Heart left ventricle (tissue), 16 donors: ENCODE measurements at regions of chr6 and their contacts with region 1.

Region 1: GRCh38 chr6:33633462-33634158 is 12.5 kb downstream of the ITPR3 start:
- DNase-seq: peak; percentile 72 to 84 (median 79)
- ATAC-seq: peak; percentile 71 to 87 (median 86)
- H3K4me3 ChIP-seq: peak overlapping the region in 11 of 12 donors; percentile 23 to 58 (median 47)
- H3K27ac ChIP-seq: peak overlapping the region in 10 of 12 donors; percentile 0 to 72 (median 42)
- H3K4me1 ChIP-seq: peaks cover 0 to 32% (median 22%) of the 10 kb centered on the region in 12 donors
- H3K27me3 ChIP-seq: peaks cover 0 to 6% (median 0%) of the 10 kb centered on the region in 9 donors
- CTCF ChIP-seq: no peak
- POLR2A ChIP-seq: no peak

Region 2: DNA sequence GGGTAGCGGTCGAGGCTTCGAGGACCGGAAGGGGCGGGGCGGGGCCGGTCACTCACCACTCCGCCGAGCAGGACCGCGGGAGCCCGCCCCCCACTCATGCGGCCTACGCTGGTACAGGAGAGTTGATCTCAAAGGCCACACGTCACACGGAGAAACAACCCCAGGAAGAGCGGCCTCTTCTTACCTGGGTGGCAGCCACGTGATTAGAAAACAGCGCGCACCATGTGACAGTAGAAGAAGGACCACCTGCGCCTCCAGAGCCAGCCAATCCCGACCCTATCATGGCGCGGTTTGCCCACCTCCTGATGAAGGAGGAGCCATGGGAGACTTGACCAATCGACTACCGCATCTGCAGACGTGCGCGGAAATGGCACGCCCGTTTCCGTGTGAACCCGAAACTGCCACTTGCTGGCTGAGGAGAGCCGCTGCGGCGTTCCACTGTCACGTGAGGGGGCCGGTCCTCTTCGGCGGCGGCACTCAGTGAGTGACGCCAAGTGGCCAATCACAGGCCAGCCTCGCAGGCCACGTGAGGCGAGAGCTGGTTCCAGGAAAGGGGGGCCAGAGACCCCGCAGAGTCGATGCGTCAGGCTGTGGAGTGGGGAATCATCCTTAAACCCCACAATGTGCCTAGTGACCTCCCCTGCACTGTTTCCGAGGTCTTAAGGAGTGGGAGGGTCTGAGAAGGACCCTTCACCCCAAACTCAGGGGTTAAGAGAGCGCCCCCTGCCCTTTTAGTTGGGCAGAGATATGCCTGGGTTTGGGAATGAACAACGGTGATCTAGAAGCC is 215.5 kb before region 1 on chr6 and contains the start of gene CUTA:
- intact Hi-C with region 1: no loop called
- DNase-seq: peak; percentile 100
- ATAC-seq: peak; percentile 94 to 97 (median 96)
- H3K4me3 ChIP-seq: peak within 1 kb of the TSS; percentile 30 to 80 (median 65)
- H3K27ac ChIP-seq: peak within 1 kb of the TSS; percentile 83 to 97 (median 92)
- H3K4me1 ChIP-seq: peaks cover 0 to 40% (median 25%) of the 10 kb centered on the region in 12 donors
- H3K27me3 ChIP-seq: no peaks in the 10 kb centered on the region
- CTCF ChIP-seq: peak in 11 of 12 donors; percentile 23 to 64 (median 50)
- POLR2A ChIP-seq: peak in 1 of 2 donors; percentile 63
- total RNA-seq, gene CUTA: 99.3 to 142 (median 120) TPM

Region 3: DNA sequence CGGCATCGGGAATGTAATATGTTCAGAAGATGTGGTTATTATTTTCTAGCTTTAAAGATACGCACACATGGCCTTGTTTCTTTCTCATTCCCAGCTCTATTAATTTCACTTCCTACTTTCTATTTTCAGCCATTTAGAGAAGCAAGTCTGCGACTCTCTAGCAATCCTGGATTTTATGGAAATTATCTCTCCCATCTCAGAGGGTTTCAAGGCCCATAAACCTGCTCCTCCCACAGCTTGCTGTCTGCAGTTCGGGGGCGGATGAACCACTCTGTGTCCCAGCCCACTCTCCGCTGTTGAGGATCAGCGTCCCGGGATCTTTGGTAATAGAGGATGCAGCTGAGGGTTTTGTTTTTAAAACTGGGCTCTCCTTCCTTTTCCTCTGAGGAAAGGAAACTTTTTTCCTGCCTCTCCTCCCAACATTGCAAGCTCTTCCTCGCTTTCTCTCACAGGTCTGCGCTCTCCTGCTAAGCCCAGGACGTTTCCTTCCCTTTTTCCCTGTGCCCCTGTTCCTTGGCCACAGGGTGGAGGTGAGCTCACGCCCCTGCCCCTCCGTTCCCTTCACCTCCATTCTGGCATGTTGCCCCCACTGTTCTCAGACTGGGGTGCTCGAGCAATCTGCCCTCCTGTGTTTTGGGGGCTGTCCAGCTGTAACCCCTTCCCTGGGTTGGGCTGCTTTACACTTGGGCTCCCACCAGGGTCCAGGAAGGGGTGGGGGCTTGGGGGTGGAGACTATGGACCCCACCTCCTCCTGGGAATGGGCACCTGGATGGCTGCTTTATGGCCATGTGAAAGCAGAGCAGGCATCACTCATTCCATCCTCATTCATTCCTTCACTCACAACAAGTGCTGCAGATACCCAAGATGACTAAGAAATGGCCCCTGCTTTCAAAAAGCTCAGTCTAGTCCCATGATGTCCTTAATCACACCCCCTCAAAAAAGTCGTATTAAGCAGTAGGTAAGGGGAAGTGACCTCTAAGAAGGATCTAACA is 124.4 kb before region 1 on chr6:
- intact Hi-C with region 1: no loop called
- DNase-seq: peak in 1 of 5 donors; percentile 20
- ATAC-seq: peak in 1 of 4 donors; percentile 28
- H3K4me3 ChIP-seq: peak overlapping the region in 8 of 12 donors; percentile 18 to 42 (median 34)
- H3K27ac ChIP-seq: peak overlapping the region in 6 of 12 donors; percentile 22 to 49 (median 38)
- H3K4me1 ChIP-seq: peaks cover 0 to 17% (median 2%) of the 10 kb centered on the region in 12 donors
- H3K27me3 ChIP-seq: peaks cover 0 to 5% (median 0%) of the 10 kb centered on the region in 9 donors
- CTCF ChIP-seq: no peak
- POLR2A ChIP-seq: no peak

Region 4: DNA sequence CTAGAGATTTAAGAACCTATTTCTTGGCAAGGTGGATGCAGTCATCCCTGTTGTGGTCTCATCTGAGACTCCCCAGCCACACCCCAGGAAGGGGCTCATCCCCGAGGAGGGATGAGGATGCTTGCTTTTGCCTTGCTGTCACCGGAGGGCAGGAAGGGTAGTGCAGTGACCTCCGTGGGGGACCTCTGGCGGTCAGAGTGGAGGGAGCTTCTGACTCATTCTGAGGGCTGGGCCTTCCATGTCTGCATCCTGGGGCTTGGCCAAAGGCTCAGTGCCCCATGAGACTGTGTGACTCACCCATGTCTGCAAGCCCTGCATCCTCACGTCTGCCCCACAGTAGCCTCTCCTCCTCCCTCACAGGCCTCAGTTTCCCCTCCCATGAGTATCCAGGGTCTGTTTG is 39.2 kb after region 1 on chr6:
- intact Hi-C with region 1: loop called in 1 of 10 experiments (anchors 5 kb)
- DNase-seq: peak; percentile 80 to 95 (median 89)
- ATAC-seq: peak; percentile 93 to 98 (median 96)
- H3K4me3 ChIP-seq: no peak overlapping the region
- H3K27ac ChIP-seq: no peak overlapping the region
- H3K4me1 ChIP-seq: peaks cover 0 to 13% (median 6%) of the 10 kb centered on the region in 12 donors
- H3K27me3 ChIP-seq: no peaks in the 10 kb centered on the region
- CTCF ChIP-seq: peak; percentile 20 to 73 (median 59)
- POLR2A ChIP-seq: no peak

Region 5: DNA sequence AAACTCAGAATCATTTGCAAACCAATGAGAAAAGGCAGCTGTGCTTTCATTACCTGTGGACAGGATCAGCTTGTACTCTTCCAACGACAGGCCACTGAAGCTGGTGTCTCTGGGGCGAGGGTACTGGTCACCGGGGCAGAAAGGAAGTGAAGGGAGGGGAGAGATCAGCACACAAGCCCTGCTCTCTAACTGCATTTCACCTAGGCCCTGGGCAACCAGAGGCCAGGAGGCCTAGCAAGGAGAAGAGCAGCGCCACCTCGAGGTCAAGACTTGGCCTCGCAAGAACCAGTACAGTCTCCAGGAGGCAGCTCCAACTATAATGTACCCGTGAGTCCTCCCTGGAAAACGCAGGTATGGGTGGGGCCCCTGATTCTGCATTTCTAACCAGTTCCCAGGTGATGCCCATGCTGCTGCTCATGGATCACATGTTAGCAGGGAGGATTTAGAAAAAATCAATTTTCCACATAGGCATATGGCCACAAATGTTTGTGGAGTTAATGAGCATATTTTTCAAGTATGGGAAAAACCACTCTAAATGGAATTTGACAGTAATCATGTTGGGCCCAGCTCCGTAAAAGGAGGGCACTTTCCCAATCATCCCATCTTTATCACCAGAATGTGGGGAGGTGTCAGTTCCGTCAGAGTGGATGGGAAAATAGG is 66.9 kb after region 1 on chr6:
- intact Hi-C with region 1: loop called in 1 of 10 experiments (anchors 2 kb)
- DNase-seq: peak; percentile 50 to 77 (median 75)
- ATAC-seq: peak; percentile 27 to 58 (median 48)
- H3K4me3 ChIP-seq: no peak overlapping the region
- H3K27ac ChIP-seq: peak overlapping the region in 4 of 12 donors; percentile 19 to 41 (median 38)
- H3K4me1 ChIP-seq: peaks cover 6 to 57% (median 39%) of the 10 kb centered on the region in 12 donors
- H3K27me3 ChIP-seq: no peaks in the 10 kb centered on the region
- CTCF ChIP-seq: peak; percentile 55 to 76 (median 66)
- POLR2A ChIP-seq: no peak

Region 6: DNA sequence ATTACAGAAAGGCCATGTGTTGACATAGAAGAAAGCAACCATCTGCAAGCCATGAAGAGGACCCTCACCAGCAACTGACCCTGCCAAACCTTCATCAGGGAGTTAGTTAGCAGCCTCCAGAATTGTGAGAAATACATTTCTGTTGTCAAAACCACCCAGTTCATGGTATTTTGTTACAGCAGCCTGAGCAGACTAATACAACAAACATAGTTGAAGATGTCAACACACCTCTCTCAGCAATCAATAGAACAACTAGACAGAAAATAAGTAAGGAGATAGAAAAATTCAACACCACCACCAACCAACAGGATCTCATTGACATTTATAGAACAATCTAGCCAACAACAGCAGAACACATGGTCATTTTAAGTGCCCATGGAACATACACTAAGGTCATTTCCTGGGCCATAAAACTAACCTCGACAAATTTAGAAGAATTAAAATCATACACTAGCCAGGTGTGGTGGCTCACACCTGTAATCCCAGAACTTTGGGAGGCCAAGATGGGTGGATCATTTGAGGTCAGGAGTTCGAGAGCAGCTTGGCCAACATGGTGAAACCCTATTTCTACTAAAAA is 1474.8 kb after region 1 on chr6:
- intact Hi-C with region 1: no loop called
- DNase-seq: no peak
- ATAC-seq: no peak
- H3K4me3 ChIP-seq: no peak overlapping the region
- H3K27ac ChIP-seq: no peak overlapping the region
- H3K4me1 ChIP-seq: no peaks in the 10 kb centered on the region
- H3K27me3 ChIP-seq: no peaks in the 10 kb centered on the region
- CTCF ChIP-seq: no peak
- POLR2A ChIP-seq: no peak